H1 (cell line): ENCODE measurements at regions of chr15 and their contacts with region 1.

Region 1: DNA sequence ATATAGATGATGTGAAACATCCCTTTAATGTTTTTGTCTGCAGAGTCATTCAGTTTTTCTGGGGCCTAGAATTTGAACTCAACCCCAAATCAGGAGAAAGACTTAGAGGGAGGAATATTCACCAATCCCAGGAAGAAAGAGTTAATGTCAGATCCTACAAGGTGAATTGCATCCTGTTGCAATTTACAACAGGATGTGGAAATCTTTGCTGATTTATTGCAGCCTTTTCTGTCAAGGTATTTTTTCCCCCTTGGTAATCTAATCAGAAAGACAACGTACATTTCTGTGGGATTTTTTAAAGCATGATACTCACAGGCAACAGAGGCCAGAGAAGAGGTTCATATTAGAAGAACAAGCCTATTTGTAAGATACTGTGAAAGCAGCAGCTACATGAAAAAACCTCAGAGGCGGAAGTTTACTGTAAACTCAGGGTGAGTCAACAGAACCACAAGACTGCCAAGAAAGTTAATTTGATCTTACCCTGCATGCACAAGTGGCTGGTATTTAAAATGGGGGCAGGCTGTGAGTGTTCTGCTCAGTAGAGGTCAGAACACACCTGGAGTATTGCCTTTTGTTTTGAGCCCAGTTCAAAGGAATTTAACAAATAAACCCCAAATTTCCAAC is 531.9 kb downstream of the AGBL1 start:
- DNase-seq: no peak
- H3K4me3 ChIP-seq: no peak overlapping the region
- H3K27ac ChIP-seq: peak overlapping the region; percentile 34; the same call in 1 of the 2 replicates
- H3K4me1 ChIP-seq: peaks cover 0 to 3% (median 0%) of the 10 kb centered on the region in 4 experiments; a peak in 1 of 7 replicates
- H3K27me3 ChIP-seq: no peaks in the 10 kb centered on the region
- CTCF ChIP-seq: no peak
- EP300 ChIP-seq: no peak
- POLR2A ChIP-seq: no peak
- RAD21 ChIP-seq: no peak

Region 2: GRCh38 chr15:86624261-86625036 is 12.9 kb after region 1 on chr15:
- CTCF ChIA-PET with region 1: interaction called, 13 read pairs
- POLR2A ChIA-PET with region 1: no interaction called
- DNase-seq: peak; percentile 58 to 70
- H3K4me3 ChIP-seq: no peak overlapping the region
- H3K27ac ChIP-seq: no peak overlapping the region
- H3K4me1 ChIP-seq: peaks cover 0 to 2% (median 0%) of the 10 kb centered on the region in 4 experiments; a peak in 3 of 7 replicates
- H3K27me3 ChIP-seq: no peaks in the 10 kb centered on the region
- CTCF ChIP-seq: peak; percentile 79 to 88 (median 80)
- EP300 ChIP-seq: no peak
- POLR2A ChIP-seq: no peak
- RAD21 ChIP-seq: peak; percentile 97 to 98